ENCODE measurements at regions of chr7 and their contacts with region 1.

Region 1: DNA sequence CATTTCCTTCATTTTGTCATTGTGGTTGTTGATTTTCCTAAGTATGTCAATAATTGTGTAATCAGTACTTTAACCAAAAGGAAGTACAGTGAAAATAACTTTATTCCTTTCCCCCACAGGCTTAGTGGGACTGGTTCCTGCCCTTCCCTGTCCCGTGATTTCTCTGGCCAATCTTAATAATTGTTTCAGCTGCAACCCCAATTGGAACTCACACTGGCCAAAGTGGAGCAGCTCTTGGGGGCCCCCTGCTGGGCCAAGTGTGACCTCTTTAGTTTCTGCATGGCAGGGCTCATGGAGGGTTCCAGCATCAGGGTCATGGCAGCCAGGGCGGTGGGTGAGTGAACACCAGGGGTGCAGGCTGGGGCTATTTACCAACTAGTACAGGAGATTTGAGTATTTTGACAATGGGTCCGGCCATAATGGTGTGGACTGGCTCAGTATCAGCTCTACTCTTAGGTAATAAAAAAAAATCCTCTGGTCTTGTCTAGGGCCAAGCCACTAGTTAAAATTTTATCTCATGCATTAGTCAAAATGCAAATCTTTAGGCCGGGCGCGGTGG is 31.7 kb downstream of the CYCS start:
- DNase-seq: peak; percentile 62 to 92
- H3K4me3 ChIP-seq: no peak overlapping the region
- H3K4me1 ChIP-seq: peaks cover 2% of the 10 kb centered on the region; the same call in 1 of the 2 replicates
- H3K27me3 ChIP-seq: no peaks in the 10 kb centered on the region

Region 2: DNA sequence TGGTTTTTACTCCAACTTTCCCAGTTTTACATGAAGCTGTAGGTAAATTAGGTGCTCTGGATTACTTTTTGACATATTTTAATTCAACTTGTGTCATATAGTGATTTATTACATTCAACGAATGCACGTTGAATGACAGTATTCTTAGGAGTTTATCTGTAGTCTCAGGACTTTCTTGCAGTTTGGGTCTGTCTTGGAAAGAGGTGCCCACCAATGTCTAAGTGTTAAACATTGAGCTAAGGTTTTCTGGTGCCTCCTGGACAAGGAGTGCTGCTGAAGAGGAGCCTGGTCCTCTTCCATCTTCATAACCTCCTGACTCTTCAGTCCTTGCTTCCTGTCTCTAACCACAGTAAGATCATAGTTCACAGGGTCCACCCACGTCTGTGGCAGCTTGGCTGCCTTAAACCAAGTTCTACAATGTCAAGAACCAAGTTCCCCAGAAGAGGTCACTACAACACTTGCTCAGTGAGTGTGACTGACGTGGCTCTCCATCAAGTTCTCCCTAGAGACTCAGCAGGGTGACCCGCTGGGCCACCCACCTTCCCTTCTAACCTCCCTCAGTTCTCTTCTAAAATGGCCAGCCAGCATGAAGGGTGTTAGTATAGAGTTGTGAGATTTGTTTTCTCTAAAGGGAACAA is 803.2 kb before region 1 on chr7:
- in situ Hi-C with region 1: loop called (anchors 25 kb)
- DNase-seq: peak; percentile 56 to 78
- H3K4me3 ChIP-seq: no peak overlapping the region
- H3K4me1 ChIP-seq: no peaks in the 10 kb centered on the region
- H3K27me3 ChIP-seq: peaks cover 34% of the 10 kb centered on the region

Region 3: GRCh38 chr7:24819916-24820689 is 273.2 kb before region 1 on chr7:
- in situ Hi-C with region 1: loop called (anchors 5 kb)
- DNase-seq: peak; percentile 79 to 89
- H3K4me3 ChIP-seq: no peak overlapping the region
- H3K4me1 ChIP-seq: peaks cover 15% of the 10 kb centered on the region
- H3K27me3 ChIP-seq: no peaks in the 10 kb centered on the region

Region 4: DNA sequence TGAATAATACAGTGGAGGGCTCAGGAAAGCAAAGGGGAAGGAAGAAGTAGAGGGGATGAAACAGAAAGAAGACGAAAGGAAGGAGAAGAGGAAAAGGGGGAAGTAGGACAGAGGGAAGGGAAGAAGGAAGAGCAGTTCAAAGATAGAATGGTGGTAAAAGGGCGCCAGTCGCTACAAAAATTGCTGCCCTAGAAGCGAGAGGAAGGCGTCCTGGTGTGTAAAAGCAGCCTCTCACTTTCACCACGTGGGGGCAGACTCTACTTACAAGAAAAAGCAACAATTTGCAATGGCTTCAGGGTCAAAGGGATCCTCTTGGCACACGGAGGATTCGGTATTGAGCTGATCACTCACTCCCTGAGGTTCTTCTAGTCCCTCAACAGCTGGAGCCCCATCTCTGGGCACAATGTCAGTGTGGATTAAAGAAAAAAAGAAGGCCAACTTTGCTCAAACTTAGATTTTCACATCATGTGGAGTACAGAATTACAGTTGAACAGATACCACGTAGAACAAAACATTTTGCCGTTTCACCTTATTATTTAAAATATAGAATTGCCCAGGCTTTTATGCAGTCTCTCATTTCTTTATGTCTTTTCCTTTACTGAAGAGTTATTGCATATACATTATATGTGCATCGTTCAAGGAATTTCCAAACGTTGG is 166.4 kb after region 1 on chr7:
- in situ Hi-C with region 1: no loop called
- DNase-seq: peak; percentile 82
- H3K4me3 ChIP-seq: no peak overlapping the region
- H3K4me1 ChIP-seq: peaks cover 4% of the 10 kb centered on the region
- H3K27me3 ChIP-seq: peaks cover under 1% of the 10 kb centered on the region; the same call in 1 of the 2 replicates

Region 5: GRCh38 chr7:25720427-25720826 is 627.1 kb after region 1 on chr7:
- in situ Hi-C with region 1: no loop called
- DNase-seq: peak in 1 of 2 experiments; percentile 41
- H3K4me3 ChIP-seq: no peak overlapping the region
- H3K4me1 ChIP-seq: peaks cover 35% of the 10 kb centered on the region
- H3K27me3 ChIP-seq: no peaks in the 10 kb centered on the region

Measured in HAP-1 (cell line).